Transverse colon (tissue), 4 donors: ENCODE measurements at regions of chr2 and their contacts with region 1.

Region 1: GRCh38 chr2:164737612-164738081 is 104.0 kb downstream of the COBLL1 start:
- DNase-seq: peak; percentile 62
- H3K4me3 ChIP-seq: no peak overlapping the region
- H3K27ac ChIP-seq: no peak overlapping the region
- H3K4me1 ChIP-seq: peaks cover 0 to 30% (median 14%) of the 10 kb centered on the region in 4 donors
- H3K27me3 ChIP-seq: no peaks in the 10 kb centered on the region
- CTCF ChIP-seq: peak; percentile 71 to 80 (median 75)
- EP300 ChIP-seq: no peak
- POLR2A ChIP-seq: no peak

Region 2: GRCh38 chr2:164841719-164842623 is 104.3 kb after region 1 on chr2 and contains the start of gene COBLL1:
- in situ Hi-C with region 1: no loop called
- intact Hi-C with region 1: loop called (anchors 10 kb)
- DNase-seq: peak; percentile 89
- H3K4me3 ChIP-seq: peak within 1 kb of the TSS; percentile 76 to 80 (median 78)
- H3K27ac ChIP-seq: peak within 1 kb of the TSS; percentile 91 to 95 (median 92)
- H3K4me1 ChIP-seq: peaks cover 0 to 33% (median 3%) of the 10 kb centered on the region in 4 donors
- H3K27me3 ChIP-seq: no peaks in the 10 kb centered on the region
- CTCF ChIP-seq: peak; percentile 86 to 95 (median 89)
- EP300 ChIP-seq: no peak
- POLR2A ChIP-seq: peak; percentile 66
- total RNA-seq, gene COBLL1: 21.7 to 129 (median 30.7) TPM

Region 3: DNA sequence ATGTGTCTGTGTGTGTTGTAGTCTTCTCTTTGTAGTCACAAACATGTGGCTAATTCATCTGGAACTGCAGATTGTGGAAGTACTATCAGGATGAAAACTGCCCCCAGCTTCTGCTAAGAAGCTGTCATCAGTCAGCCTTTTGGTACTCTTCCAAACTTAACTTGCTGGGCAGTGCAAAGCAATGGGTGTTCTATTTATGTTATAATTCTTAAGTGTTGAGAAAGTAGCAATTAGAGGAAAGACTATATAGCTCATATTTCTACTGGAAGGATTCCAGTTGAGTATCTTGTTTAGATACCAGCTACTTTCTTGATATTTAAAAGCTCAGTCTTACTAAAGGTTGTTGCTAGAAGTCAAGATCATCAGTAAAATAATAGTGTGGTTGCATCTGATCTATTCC is 165.6 kb after region 1 on chr2:
- in situ Hi-C with region 1: loop called in 2 of 4 experiments (anchors 10 to 25 kb)
- intact Hi-C with region 1: no loop called
- DNase-seq: no peak
- H3K4me3 ChIP-seq: no peak overlapping the region
- H3K27ac ChIP-seq: no peak overlapping the region
- H3K4me1 ChIP-seq: no peaks in the 10 kb centered on the region
- H3K27me3 ChIP-seq: no peaks in the 10 kb centered on the region
- CTCF ChIP-seq: no peak
- EP300 ChIP-seq: no peak
- POLR2A ChIP-seq: no peak

Region 4: DNA sequence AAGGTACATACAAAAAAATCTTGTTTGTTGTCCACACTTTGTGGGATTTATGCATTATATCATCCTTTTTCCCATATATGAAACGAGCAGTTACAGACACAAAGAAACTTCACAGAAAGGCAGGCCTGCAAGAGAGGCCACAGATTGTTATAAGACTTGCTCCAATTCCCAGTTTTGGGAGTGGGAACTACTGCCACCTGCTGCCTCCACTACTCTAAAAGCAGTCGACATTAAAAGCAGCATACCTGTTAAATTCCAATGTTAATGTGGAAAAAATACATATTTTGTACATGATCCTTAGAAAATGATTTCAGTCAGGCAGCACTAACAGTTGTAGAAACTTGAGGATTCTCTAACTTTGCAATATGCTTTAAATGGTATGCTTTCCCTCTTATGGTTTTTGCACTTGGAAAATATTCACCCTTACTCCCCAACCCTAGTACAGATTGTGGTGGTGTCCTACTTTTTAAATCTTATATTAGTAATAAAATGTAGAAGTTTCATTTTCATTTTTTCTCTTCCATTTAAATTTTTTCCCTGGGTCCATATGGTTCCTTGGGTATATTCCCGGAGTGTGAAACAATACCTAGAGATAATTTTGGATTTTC is 179.8 kb after region 1 on chr2:
- in situ Hi-C with region 1: loop called in 3 of 4 experiments (anchors 10 to 25 kb)
- intact Hi-C with region 1: loop called (anchors 1 kb)
- DNase-seq: peak; percentile 48
- H3K4me3 ChIP-seq: no peak overlapping the region
- H3K27ac ChIP-seq: no peak overlapping the region
- H3K4me1 ChIP-seq: peaks cover 0 to 15% (median 5%) of the 10 kb centered on the region in 4 donors
- H3K27me3 ChIP-seq: no peaks in the 10 kb centered on the region
- CTCF ChIP-seq: peak; percentile 35 to 48 (median 40)
- EP300 ChIP-seq: no peak
- POLR2A ChIP-seq: no peak

Region 5: DNA sequence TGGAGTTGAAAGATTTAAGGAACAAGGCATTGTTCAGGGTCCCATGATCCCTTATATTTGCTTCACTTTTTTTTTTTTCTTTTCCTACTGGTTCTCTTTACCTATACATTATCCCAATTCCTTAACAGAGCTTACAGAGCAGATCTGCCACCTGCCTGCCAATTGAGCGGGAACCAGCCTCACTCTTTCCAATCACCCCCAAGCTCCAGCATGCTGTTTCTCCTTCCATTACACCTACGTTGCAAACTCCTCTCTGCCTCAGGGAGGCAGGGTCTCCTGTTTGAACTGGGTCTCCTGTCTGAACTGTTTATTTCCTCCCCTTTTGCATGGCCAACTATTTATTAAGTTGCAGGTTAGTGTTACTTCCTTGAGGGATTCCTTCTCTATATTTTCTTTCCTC is 294.9 kb after region 1 on chr2:
- in situ Hi-C with region 1: no loop called
- intact Hi-C with region 1: no loop called
- DNase-seq: no peak
- H3K4me3 ChIP-seq: no peak overlapping the region
- H3K27ac ChIP-seq: no peak overlapping the region
- H3K4me1 ChIP-seq: no peaks in the 10 kb centered on the region
- H3K27me3 ChIP-seq: no peaks in the 10 kb centered on the region
- CTCF ChIP-seq: no peak
- EP300 ChIP-seq: no peak
- POLR2A ChIP-seq: no peak

Region 6: GRCh38 chr2:165193178-165193777 is 455.6 kb after region 1 on chr2:
- in situ Hi-C with region 1: loop called in 1 of 4 experiments (anchors 25 kb)
- intact Hi-C with region 1: no loop called
- DNase-seq: no peak
- H3K4me3 ChIP-seq: no peak overlapping the region
- H3K27ac ChIP-seq: no peak overlapping the region
- H3K4me1 ChIP-seq: no peaks in the 10 kb centered on the region
- H3K27me3 ChIP-seq: no peaks in the 10 kb centered on the region
- CTCF ChIP-seq: no peak
- EP300 ChIP-seq: no peak
- POLR2A ChIP-seq: no peak